PC-3 (cell line): ENCODE measurements at regions of chr17 and their contacts with region 1.

Region 1: DNA sequence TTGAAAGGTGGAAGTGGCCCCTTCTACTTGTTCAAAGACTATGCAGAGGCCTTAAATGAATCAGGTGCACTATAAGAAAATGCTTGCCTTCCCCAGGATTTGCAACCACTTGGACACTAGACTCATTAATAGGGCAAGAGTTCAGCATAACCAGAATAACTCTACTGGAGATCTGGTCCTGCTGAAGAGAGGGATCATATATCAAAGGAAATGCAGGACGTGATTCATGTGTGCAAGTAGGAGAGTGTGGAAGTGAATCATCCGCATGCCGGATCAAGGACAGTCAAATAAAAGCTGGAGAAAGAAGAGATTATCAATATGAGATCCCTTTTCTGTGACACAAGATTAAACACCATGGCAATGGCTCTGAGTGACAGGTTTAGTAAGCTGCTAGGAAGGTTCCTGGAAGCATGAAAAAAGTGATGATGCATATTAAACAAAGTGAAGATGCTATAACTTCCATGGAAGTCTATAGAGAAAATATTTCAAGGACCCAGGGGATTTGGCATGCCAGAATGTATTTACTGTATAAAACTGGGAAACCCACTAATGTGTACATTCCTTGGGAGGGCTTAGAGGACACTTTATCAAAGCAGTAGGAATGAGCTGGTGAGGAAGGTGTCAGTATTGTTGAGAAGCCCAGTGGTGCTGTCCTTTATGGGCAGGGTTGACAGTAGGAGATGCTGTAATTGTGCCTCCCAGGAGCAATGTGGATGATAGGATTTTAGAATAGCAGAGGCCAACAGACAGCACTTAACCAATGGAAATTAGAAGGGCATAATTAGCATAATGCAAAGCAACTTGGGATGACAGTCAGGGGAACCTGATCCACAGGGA is 133.1 kb downstream of the ABCA8 start:
- DNase-seq: peak; percentile 97
- ATAC-seq: peak; percentile 97
- H3K4me3 ChIP-seq: no peak overlapping the region
- H3K27ac ChIP-seq: peak overlapping the region; percentile 48
- H3K4me1 ChIP-seq: peaks cover 25% of the 10 kb centered on the region
- H3K27me3 ChIP-seq: no peaks in the 10 kb centered on the region
- CTCF ChIP-seq: no peak

Region 2: DNA sequence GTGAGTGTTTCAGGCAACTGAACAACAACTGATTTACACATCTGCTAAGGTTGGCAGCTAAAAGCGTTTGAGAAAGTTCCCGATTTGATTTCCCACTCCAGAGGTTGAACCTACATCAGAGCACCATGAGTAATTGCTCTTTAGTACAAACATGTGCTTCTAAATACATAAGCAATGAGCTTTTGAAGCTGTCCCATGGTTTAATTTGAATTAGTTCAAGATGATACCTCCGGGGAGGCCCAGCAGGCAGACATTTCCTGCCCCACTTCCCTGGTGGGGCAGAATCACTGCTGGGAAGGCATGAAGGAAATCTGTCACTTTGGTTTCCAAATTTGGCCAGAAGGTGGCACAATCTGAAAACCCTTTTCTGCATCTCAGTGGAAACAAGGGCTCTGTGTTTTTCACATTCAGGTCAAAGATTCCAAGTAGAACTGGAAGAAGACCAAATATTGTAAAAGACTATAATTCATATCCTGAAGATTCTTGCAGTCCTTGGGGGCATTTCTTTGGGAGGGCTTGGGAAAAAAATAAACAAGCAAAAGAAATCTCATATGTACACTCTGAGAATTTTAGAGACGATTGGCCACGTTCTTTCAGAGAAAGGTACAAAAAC is 44.7 kb before region 1 on chr17:
- CTCF ChIA-PET with region 1: no interaction called
- POLR2A ChIA-PET with region 1: no interaction called
- intact Hi-C with region 1: loop called (anchors 1 kb)
- DNase-seq: peak; percentile 83
- ATAC-seq: peak; percentile 58
- H3K4me3 ChIP-seq: no peak overlapping the region
- H3K27ac ChIP-seq: no peak overlapping the region
- H3K4me1 ChIP-seq: peaks cover 13% of the 10 kb centered on the region
- H3K27me3 ChIP-seq: peaks cover 5% of the 10 kb centered on the region; the same call in 1 of the 2 replicates
- CTCF ChIP-seq: peak; percentile 93

Region 3: GRCh38 chr17:68835071-68835470 is 13.0 kb after region 1 on chr17:
- CTCF ChIA-PET with region 1: no interaction called
- POLR2A ChIA-PET with region 1: no interaction called
- intact Hi-C with region 1: loop called (anchors 1 kb)
- DNase-seq: peak; percentile 54
- ATAC-seq: peak; percentile 95
- H3K4me3 ChIP-seq: no peak overlapping the region
- H3K27ac ChIP-seq: peak overlapping the region; percentile 13; the same call in 1 of the 2 replicates
- H3K4me1 ChIP-seq: peaks cover 12% of the 10 kb centered on the region
- H3K27me3 ChIP-seq: no peaks in the 10 kb centered on the region
- CTCF ChIP-seq: no peak

Region 4: GRCh38 chr17:68849673-68850610 is 27.9 kb after region 1 on chr17:
- CTCF ChIA-PET with region 1: no interaction called
- POLR2A ChIA-PET with region 1: no interaction called
- intact Hi-C with region 1: loop called (anchors 1 kb)
- DNase-seq: no peak
- ATAC-seq: no peak
- H3K4me3 ChIP-seq: no peak overlapping the region
- H3K27ac ChIP-seq: no peak overlapping the region
- H3K4me1 ChIP-seq: no peaks in the 10 kb centered on the region
- H3K27me3 ChIP-seq: no peaks in the 10 kb centered on the region
- CTCF ChIP-seq: no peak